Panc1 (cell line): ENCODE measurements at regions of chr18 and their contacts with region 1.

Region 1: DNA sequence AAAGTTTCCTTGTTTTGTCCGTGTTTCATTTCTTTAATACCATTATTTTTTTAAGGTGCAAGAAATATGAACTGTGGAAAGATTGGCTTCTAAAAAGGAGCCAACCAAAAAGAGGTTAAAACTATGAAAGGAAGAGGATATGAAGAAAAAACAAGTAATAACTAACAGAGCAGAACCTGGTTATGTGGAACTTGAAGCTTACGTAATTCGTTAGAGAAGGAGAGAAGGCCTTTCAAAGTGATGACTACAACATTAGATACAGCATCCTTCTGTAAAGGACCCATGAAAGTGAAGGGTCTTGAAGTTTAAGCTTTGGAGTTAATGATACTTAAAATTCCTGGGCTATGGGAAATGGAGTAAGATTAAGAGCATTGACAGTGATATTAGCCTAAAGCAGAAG is 84.5 kb downstream of the ANKRD12 start:
- DNase-seq: no peak
- ATAC-seq: no peak
- H3K4me3 ChIP-seq: no peak overlapping the region
- H3K27ac ChIP-seq: no peak overlapping the region
- H3K4me1 ChIP-seq: no peaks in the 10 kb centered on the region
- H3K27me3 ChIP-seq: no peaks in the 10 kb centered on the region
- CTCF ChIP-seq: no peak

Region 2: DNA sequence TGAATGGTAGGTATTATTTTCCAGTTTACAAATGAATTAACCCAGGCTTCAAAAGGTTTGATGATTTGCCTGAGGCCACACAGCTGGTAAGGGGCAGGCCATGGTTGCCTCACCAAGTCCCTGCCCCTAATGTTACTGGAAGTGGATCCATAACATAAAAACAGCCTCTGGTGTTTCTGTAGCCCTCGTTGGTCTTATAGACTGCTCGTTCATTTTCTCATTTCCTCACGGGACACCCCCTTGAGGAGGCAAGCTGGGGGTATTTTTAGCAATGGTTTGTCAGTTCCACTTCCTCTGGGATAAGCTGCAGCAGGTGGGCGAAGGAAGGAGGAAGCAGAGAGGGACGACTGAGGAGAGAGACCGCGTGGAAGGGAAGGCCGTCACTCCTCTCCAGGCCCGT is 151.4 kb before region 1 on chr18:
- CTCF ChIA-PET with region 1: no interaction called
- POLR2A ChIA-PET with region 1: no interaction called
- in situ Hi-C with region 1: no loop called
- intact Hi-C with region 1: no loop called
- DNase-seq: no peak
- ATAC-seq: no peak
- H3K4me3 ChIP-seq: no peak overlapping the region
- H3K27ac ChIP-seq: no peak overlapping the region
- H3K4me1 ChIP-seq: no peaks in the 10 kb centered on the region; the same call in 1 of the 2 replicates
- H3K27me3 ChIP-seq: no peaks in the 10 kb centered on the region
- CTCF ChIP-seq: no peak

Region 3: GRCh38 chr18:9156604-9157249 is 64.3 kb before region 1 on chr18:
- CTCF ChIA-PET with region 1: no interaction called
- POLR2A ChIA-PET with region 1: interaction called, 11 read pairs
- in situ Hi-C with region 1: no loop called
- intact Hi-C with region 1: no loop called
- DNase-seq: no peak
- ATAC-seq: no peak
- H3K4me3 ChIP-seq: no peak overlapping the region
- H3K27ac ChIP-seq: no peak overlapping the region
- H3K4me1 ChIP-seq: no peaks in the 10 kb centered on the region; the same call in 1 of the 2 replicates
- H3K27me3 ChIP-seq: no peaks in the 10 kb centered on the region
- CTCF ChIP-seq: no peak

Region 4: DNA sequence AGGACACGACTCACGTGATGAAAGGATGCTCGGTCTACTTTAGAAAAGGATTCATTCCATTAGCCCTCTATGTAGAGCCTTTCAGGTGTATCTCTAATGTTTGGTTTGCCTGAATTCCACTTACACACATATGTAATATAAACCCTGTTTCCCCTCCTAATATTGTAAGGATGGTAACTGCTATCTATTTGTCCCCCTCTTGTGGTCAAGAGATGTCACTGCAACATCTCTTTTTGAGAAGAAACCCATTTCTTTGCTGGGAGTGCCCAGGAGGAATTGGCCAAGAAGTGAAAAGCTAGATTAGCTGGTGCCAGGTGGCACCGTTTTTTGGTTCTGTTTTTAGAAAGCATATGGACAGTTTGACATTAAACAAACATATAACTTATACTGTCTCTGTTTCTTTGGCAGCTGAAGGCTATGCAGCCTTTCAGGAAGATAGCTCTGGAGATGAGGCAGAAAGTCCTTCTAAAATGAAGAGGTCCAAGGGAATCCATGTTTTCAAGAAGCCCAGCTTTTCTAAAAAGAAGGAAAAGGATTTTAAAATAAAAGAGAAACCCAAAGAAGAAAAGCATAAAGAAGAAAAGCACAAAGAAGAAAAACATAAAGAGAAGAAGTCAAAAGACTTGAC is 295.5 kb after region 1 on chr18:
- CTCF ChIA-PET with region 1: no interaction called
- POLR2A ChIA-PET with region 1: interaction called, 13 read pairs
- in situ Hi-C with region 1: no loop called
- intact Hi-C with region 1: no loop called
- DNase-seq: no peak
- ATAC-seq: peak; percentile 50; the same call in 1 of the 2 replicates
- H3K4me3 ChIP-seq: no peak overlapping the region
- H3K27ac ChIP-seq: no peak overlapping the region
- H3K4me1 ChIP-seq: peaks cover 7% of the 10 kb centered on the region
- H3K27me3 ChIP-seq: no peaks in the 10 kb centered on the region
- CTCF ChIP-seq: peak; percentile 86